Activated CD8-positive, alpha-beta T cell treated with anti-CD3 and anti-CD28 coated beads for 36 hours (primary cell): ENCODE measurements at regions of chr6 and their contacts with region 1.

Region 1: DNA sequence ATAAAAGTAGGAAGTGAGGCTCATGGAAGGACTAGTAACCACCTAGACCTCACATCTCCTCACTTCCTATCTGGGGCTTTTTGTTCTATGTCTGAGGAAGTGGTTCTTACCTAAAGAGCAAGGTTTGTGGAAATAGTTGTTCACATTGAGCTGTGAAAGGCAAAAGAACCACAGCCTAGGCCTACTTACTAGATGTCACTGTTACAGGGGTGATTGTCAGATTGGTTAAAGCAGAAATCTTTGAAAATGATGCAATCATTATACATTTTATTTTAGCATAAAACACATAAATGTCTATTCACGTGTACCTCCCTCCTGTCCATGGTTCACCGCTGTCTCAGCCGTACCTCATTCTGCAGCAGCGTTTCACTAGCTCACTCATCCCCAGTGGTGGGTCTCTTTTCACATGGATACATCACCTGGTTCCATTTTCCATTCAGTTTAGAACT is 268.8 kb downstream of the TMEM242 start:
- DNase-seq: peak; percentile 72
- ATAC-seq: peak; percentile 86
- H3K4me3 Mint-ChIP-seq: peak overlapping the region; percentile 61
- H3K27ac Mint-ChIP-seq: peak overlapping the region; percentile 98
- H3K4me1 Mint-ChIP-seq: peaks cover 42% of the 10 kb centered on the region
- H3K27me3 Mint-ChIP-seq: no peaks in the 10 kb centered on the region
- CTCF ChIP-seq: no peak

Region 2: DNA sequence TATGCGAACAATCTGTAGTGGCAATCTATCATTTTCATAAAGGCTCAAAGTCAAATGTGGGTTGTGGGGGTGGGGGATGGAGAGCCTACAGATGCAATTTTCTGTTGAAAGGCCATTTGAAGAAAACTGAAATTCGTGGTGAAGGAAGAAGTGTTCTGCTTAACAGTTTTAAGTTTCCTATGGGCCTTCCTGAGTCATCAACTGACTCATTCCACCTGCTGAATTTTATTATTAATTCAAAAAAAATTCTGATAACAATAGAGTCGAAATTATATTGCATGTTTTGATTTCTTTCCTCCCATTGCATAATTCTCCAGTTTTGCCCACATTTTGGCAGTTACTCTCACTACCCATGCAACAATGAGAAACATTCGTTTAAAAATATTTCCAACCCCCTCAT is 899.7 kb before region 1 on chr6:
- CTCF ChIA-PET with region 1: no interaction called
- POLR2A ChIA-PET with region 1: no interaction called
- intact Hi-C with region 1: no loop called
- DNase-seq: peak; percentile 73
- ATAC-seq: peak; percentile 71
- H3K4me3 Mint-ChIP-seq: no peak overlapping the region
- H3K27ac Mint-ChIP-seq: peak overlapping the region; percentile 58
- H3K4me1 Mint-ChIP-seq: peaks cover 14% of the 10 kb centered on the region
- H3K27me3 Mint-ChIP-seq: no peaks in the 10 kb centered on the region
- CTCF ChIP-seq: no peak

Region 3: GRCh38 chr6:157021344-157021992 is 33.1 kb before region 1 on chr6:
- CTCF ChIA-PET with region 1: no interaction called
- POLR2A ChIA-PET with region 1: interaction called, 16 read pairs
- intact Hi-C with region 1: no loop called
- DNase-seq: peak; percentile 92
- ATAC-seq: peak; percentile 82
- H3K4me3 Mint-ChIP-seq: peak overlapping the region; percentile 93
- H3K27ac Mint-ChIP-seq: peak overlapping the region; percentile 100
- H3K4me1 Mint-ChIP-seq: peaks cover 52% of the 10 kb centered on the region
- H3K27me3 Mint-ChIP-seq: no peaks in the 10 kb centered on the region
- CTCF ChIP-seq: peak; percentile 37

Region 4: GRCh38 chr6:157089258-157089657 is 34.7 kb after region 1 on chr6:
- CTCF ChIA-PET with region 1: no interaction called
- POLR2A ChIA-PET with region 1: no interaction called
- intact Hi-C with region 1: no loop called
- DNase-seq: no peak
- ATAC-seq: no peak
- H3K4me3 Mint-ChIP-seq: no peak overlapping the region
- H3K27ac Mint-ChIP-seq: no peak overlapping the region
- H3K4me1 Mint-ChIP-seq: peaks cover 10% of the 10 kb centered on the region
- H3K27me3 Mint-ChIP-seq: no peaks in the 10 kb centered on the region
- CTCF ChIP-seq: no peak